K562 (cell line): ENCODE measurements at regions of chr10 and their contacts with region 1.

Region 1: GRCh38 chr10:104323760-104324201 is 14.5 kb downstream of the ITPRIP start:
- DNase-seq: no peak
- ATAC-seq: no peak
- H3K4me3 ChIP-seq: no peak overlapping the region
- H3K27ac ChIP-seq: no peak overlapping the region
- H3K4me1 ChIP-seq: peaks cover 10 to 25% of the 10 kb centered on the region in 2 experiments; a peak in 4 of 5 replicates
- H3K27me3 ChIP-seq: no peaks in the 10 kb centered on the region
- CTCF ChIP-seq: no peak
- EP300 ChIP-seq: no peak
- POLR2A ChIP-seq: no peak
- RAD21 ChIP-seq: no peak

Region 2: GRCh38 chr10:103433858-103434257 is 889.9 kb before region 1 on chr10:
- CTCF ChIA-PET with region 1: no interaction called
- POLR2A ChIA-PET with region 1: no interaction called
- in situ Hi-C with region 1: no loop called
- intact Hi-C with region 1: no loop called
- DNase-seq: no peak
- ATAC-seq: no peak
- H3K4me3 ChIP-seq: no peak overlapping the region
- H3K27ac ChIP-seq: no peak overlapping the region
- H3K4me1 ChIP-seq: no peaks in the 10 kb centered on the region
- H3K27me3 ChIP-seq: no peaks in the 10 kb centered on the region
- CTCF ChIP-seq: no peak
- EP300 ChIP-seq: no peak
- POLR2A ChIP-seq: no peak
- RAD21 ChIP-seq: no peak

Region 3: GRCh38 chr10:104300002-104300735 is 23.6 kb before region 1 on chr10:
- CTCF ChIA-PET with region 1: no interaction called
- POLR2A ChIA-PET with region 1: no interaction called
- in situ Hi-C with region 1: no loop called
- intact Hi-C with region 1: no loop called
- DNase-seq: no peak
- ATAC-seq: no peak
- H3K4me3 ChIP-seq: no peak overlapping the region
- H3K27ac ChIP-seq: no peak overlapping the region
- H3K4me1 ChIP-seq: no peaks in the 10 kb centered on the region; a peak in 1 of 5 replicates
- H3K27me3 ChIP-seq: peaks cover 0 to 2% of the 10 kb centered on the region in 2 experiments; a peak in 1 of 5 replicates
- CTCF ChIP-seq: no peak
- EP300 ChIP-seq: no peak
- POLR2A ChIP-seq: no peak
- RAD21 ChIP-seq: no peak

Region 4: DNA sequence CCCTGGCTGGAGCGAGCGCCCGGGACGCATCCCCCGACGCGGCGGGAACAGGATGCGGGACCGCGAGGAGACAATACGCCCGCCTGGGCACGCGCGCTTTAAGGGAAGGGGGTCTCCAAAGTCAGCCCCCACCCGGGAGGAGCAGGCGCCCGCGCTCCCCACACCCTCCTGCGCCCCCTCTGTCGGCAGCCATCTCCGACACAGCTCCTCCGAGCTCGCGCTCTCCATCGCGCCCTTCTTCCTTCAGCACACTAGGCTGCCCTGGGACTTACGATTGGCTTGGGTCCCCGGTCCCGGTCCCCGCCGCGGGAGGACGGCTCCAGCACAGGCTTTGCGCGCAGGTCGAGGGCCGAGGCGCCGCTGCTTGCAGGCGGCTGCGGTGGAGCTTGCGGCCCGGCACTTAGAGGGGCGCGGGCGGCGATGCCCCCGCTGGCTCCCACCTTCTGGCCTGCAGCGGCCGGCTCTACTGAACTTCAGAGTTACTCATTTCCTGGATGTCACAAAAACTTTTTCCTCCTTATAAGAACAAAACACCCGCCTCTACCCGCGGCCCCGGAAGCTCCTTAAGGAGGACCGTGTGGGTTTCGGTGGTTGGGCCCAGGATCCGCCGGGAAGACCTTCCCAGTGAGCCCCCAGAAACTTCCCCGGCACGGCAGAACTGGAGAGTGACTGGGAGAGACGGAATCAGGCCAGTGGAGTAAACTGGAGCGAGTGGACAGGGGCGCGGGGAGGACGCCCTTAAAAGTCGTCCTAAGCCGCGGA is 14.4 kb after region 1 on chr10 and contains the start of gene ITPRIP:
- CTCF ChIA-PET with region 1: no interaction called
- POLR2A ChIA-PET with region 1: interaction called, 4 read pairs
- in situ Hi-C with region 1: no loop called
- intact Hi-C with region 1: loop called (anchors 1 kb)
- DNase-seq: peak; percentile 52 to 77 (median 58)
- ATAC-seq: peak; percentile 66
- H3K4me3 ChIP-seq: peak within 1 kb of the TSS; percentile 98
- H3K27ac ChIP-seq: peak within 1 kb of the TSS; percentile 98
- H3K4me1 ChIP-seq: peaks cover 22 to 51% of the 10 kb centered on the region in 2 experiments
- H3K27me3 ChIP-seq: no peaks in the 10 kb centered on the region
- CTCF ChIP-seq: 0 out of 6 replicates have a peak, but pooled peaks of 1 of the 3 experiments have one; percentile 2
- EP300 ChIP-seq: no peak
- POLR2A ChIP-seq: peak; percentile 75
- RAD21 ChIP-seq: no peak
- polyA plus RNA-seq, gene ITPRIP: 4.4 to 4.9 TPM